Gastrocnemius medialis (tissue), 4 donors: ENCODE measurements at regions of chr12 and their contacts with region 1.

Region 1: GRCh38 chr12:30806989-30807694 is 52.4 kb upstream of the CAPRIN2 start:
- DNase-seq: peak in 1 of 2 donors; percentile 27
- ATAC-seq: peak; percentile 89 to 91
- H3K4me3 ChIP-seq: no peak overlapping the region
- H3K27ac ChIP-seq: no peak overlapping the region
- H3K4me1 ChIP-seq: peaks cover 0 to 3% of the 10 kb centered on the region in 2 donors
- H3K27me3 ChIP-seq: no peaks in the 10 kb centered on the region
- CTCF ChIP-seq: peak; percentile 43 to 74 (median 73)
- POLR2A ChIP-seq: no peak

Region 2: DNA sequence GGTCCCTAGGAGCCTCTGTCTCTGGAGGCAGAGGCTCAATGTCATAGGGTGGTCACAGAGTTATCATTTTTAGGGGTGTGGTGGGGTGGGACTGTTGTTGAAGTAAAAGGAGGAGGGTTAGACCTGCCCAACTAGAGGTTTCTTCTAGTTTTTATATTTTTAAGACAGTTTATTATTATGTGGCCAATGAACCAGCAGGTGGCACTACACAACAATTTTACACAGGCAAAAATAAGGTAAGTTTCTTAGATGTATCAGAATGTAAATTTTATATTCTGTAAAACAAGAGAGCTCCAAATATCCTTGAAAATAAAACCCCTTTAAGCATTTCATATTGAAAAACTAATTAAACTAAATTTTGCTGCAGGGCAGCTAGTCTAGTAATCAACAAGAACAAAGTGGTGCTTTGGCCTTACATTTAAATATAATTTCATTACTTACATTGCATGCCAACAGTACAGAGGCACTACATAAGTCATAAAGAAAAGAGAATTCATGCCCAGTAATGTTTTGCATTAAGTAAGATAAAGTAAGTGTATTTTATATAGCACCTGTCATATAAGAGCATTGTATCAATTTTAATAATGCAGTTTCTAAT is 1287.5 kb before region 1 on chr12:
- in situ Hi-C with region 1: loop called in 1 of 4 experiments (anchors 25 kb)
- intact Hi-C with region 1: no loop called
- DNase-seq: no peak
- ATAC-seq: no peak
- H3K4me3 ChIP-seq: no peak overlapping the region
- H3K27ac ChIP-seq: no peak overlapping the region
- H3K4me1 ChIP-seq: peaks cover 0 to 8% of the 10 kb centered on the region in 2 donors
- H3K27me3 ChIP-seq: no peaks in the 10 kb centered on the region
- CTCF ChIP-seq: peak; percentile 51 to 64 (median 61)
- POLR2A ChIP-seq: no peak

Region 3: DNA sequence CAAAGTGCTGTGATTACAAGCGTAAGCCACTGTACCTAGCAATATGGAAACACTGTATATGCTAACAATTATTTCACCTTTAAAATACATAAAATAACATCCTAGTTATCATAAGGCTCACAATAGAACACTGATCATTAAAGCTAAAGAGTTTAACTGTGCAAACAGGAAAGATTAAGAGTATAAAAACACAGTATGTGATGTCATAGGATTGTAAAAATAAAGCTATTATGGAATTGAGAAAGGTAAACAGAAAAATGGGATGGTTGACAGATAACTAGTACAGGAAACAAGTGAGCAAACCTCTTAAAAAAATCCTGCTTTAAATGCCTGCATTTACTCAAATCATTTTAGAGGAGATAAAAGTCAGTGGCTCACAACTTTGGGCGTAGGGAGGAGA is 100.7 kb before region 1 on chr12:
- in situ Hi-C with region 1: no loop called
- intact Hi-C with region 1: no loop called
- DNase-seq: no peak
- ATAC-seq: no peak
- H3K4me3 ChIP-seq: no peak overlapping the region
- H3K27ac ChIP-seq: no peak overlapping the region
- H3K4me1 ChIP-seq: no peaks in the 10 kb centered on the region
- H3K27me3 ChIP-seq: no peaks in the 10 kb centered on the region
- CTCF ChIP-seq: no peak
- POLR2A ChIP-seq: no peak

Region 4: DNA sequence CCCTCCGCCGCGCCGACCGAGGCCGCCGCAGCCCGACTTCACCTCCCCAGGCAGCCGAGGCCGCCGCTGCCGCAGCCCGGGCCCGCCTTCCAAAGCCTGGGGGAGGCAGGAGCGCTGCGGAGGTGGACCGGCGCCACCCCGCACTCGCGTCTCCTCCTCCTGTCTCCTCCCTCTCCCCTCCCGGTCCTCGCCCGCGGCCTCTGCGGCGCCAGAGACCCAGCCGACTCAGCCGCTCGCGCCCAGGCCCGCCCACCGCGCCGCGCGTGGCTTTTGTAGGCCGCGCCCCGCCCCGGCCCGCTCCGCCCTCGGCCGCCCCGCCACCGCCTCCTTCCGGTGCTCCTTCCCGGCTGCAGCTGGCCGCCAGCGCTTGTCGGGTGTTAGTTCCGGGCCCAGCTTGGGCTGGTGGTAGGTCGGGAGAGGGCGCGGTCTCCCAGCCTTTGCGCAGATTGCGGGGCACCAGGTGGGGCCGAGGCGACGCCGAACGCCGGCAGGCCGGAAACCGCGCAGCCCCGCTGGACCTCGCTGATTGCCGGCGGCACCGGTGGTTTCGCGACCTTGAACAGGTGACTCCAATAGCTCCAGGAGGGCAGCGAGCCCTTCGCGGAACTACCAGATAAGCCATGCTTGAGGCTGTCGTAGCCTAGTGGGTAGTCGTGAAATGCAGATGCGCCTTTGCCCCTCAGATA is 52.3 kb before region 1 on chr12 and contains the start of gene CAPRIN2:
- in situ Hi-C with region 1: loop called in 1 of 4 experiments (anchors 5 kb)
- intact Hi-C with region 1: loop called (anchors 1 kb)
- DNase-seq: peak; percentile 90 to 94
- ATAC-seq: peak; percentile 93 to 96
- H3K4me3 ChIP-seq: peak within 1 kb of the TSS; percentile 58 to 94 (median 82)
- H3K27ac ChIP-seq: peak within 1 kb of the TSS; percentile 84 to 94 (median 90)
- H3K4me1 ChIP-seq: peaks cover 19 to 21% of the 10 kb centered on the region in 2 donors
- H3K27me3 ChIP-seq: no peaks in the 10 kb centered on the region
- CTCF ChIP-seq: peak in 4 of 5 experiments; percentile 44 to 53 (median 46)
- POLR2A ChIP-seq: peak; percentile 85 to 88
- total RNA-seq, gene CAPRIN2: 6.3 to 21.1 (median 7.2) TPM